GM13976 (cell line): ENCODE measurements at regions of chr17 and their contacts with region 1.

Region 1: GRCh38 chr17:40622509-40622928 is 25.1 kb downstream of the SMARCE1 start:
- DNase-seq: no peak
- CTCF ChIP-seq: no peak

Region 2: GRCh38 chr17:40791787-40792436 is 169.4 kb after region 1 on chr17:
- in situ Hi-C with region 1: loop called (anchors 10 kb)
- DNase-seq: no peak
- CTCF ChIP-seq: no peak

Region 3: DNA sequence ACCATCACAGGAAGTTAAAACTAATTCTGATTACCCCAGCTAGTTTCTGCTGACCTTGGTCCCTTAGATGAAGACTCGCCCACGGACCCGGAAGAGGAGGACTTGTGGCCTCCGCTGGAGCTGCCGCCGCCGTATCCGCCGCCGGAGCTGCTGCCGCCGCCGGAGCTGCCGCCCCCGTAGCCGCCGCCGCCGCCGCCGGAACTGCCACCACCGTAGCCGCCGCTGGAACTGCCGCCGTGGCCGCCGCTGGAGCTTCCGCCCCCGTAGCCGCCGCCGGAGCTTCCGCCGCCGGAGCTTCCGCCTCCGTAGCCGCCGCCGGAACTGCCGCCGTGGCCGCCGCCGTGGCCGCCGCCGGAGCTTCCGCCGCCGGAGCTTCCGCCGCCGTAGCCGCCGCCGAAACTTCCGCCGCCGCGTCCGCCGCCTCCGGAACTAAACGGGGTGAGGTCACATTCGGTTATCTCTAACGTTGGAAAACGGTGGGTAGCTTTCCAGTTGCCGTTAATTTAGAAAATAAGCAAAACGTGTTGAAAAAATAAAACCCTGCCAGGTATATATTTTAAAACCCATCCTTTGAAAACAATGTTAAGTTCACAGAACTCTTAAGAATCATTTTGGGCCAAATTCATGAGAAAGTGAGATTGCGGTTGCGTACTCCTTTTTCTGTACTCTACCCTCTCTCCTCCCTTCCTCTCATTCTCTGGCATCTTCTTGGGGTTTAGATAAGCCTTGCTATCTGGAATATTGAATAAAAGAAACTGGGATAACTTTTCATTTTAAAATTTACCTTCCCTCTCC is 196.4 kb after region 1 on chr17:
- in situ Hi-C with region 1: no loop called
- DNase-seq: peak; percentile 87
- CTCF ChIP-seq: no peak